ENCODE measurements at regions of chr9 and their contacts with region 1.

Region 1: DNA sequence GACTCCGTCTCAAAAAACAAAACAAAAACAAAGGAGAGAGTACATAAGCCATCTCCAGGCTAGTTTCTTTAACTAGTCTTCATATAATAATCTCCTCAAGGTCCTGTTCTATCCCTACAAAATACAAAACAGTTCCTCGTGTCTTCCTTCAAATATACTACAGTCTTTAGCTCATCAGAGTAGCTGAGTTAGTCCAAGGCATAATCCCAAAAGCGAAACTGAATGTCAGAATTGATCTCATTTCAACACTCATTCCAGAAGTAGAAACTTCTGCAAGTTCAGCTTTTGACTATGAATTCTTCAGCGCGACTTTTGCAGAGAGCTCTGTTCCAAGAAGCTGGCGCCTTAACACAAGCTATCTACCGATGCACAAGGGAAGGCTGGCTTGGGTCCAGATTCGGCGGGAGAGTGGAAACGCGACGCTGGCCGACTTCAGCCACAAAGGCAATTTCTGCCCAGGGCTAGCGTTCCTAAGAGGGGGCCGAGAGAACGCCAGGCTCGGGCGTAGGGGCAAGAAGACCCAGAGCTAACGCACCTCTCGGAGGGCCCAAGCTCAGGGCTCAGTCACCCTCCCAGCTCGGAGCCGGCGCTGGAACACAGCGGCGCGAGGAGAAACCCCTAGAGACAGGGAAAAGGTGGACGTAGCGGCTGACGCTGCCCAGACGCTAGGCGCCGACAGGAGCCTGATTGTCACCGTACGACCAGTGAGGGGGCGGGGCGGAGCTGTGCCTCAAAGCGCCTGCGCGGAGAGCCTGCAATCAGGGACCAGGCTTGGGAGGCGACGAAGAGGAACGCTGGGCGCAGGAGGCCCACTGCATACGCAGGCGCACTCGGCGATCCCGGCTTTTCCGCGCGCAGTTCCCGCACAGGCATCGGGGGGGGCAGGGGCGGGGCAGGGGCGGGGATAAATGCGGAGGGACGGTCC is 469 bp upstream of the HSDL2 start:
- DNase-seq: peak; percentile 96
- ATAC-seq: peak; percentile 91
- H3K4me3 ChIP-seq: peak overlapping the region; percentile 99
- H3K27ac ChIP-seq: peak overlapping the region; percentile 75
- H3K4me1 ChIP-seq: peaks cover 21% of the 10 kb centered on the region
- H3K27me3 ChIP-seq: no peaks in the 10 kb centered on the region
- CTCF ChIP-seq: no peak

Region 2: GRCh38 chr9:112288029-112288428 is 91.4 kb before region 1 on chr9:
- CTCF ChIA-PET with region 1: no interaction called
- POLR2A ChIA-PET with region 1: no interaction called
- intact Hi-C with region 1: no loop called
- DNase-seq: no peak
- ATAC-seq: no peak
- H3K4me3 ChIP-seq: no peak overlapping the region
- H3K27ac ChIP-seq: no peak overlapping the region
- H3K4me1 ChIP-seq: no peaks in the 10 kb centered on the region
- H3K27me3 ChIP-seq: no peaks in the 10 kb centered on the region
- CTCF ChIP-seq: no peak

Region 3: DNA sequence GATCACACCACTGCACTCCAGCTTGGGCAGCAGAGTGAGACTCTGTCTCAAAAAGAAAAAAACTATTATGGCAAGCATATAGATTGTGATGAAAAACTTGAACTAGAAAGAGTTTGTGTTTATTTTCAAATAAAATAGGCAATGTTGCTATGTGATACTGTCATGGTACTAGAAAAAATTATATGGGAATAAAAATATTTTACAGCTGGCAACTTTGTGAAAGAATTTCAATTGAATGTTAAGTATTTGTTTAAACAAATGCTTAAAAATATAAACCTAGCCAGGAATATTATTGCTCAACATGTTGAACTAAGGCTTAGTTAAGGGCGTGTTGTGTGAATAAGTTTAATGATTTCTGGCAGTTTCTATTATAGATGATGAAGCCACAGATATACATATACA is 32.2 kb after region 1 on chr9:
- CTCF ChIA-PET with region 1: no interaction called
- POLR2A ChIA-PET with region 1: no interaction called
- intact Hi-C with region 1: loop called (anchors 2 kb)
- DNase-seq: no peak
- ATAC-seq: peak; percentile 69
- H3K4me3 ChIP-seq: no peak overlapping the region
- H3K27ac ChIP-seq: no peak overlapping the region
- H3K4me1 ChIP-seq: no peaks in the 10 kb centered on the region
- H3K27me3 ChIP-seq: no peaks in the 10 kb centered on the region
- CTCF ChIP-seq: no peak

Region 4: GRCh38 chr9:112486221-112487007 is 107.0 kb after region 1 on chr9 and contains the start of gene KIAA1958:
- CTCF ChIA-PET with region 1: no interaction called
- POLR2A ChIA-PET with region 1: no interaction called
- intact Hi-C with region 1: loop called (anchors 10 kb)
- DNase-seq: peak; percentile 74
- ATAC-seq: peak; percentile 88
- H3K4me3 ChIP-seq: peak within 1 kb of the TSS; percentile 96
- H3K27ac ChIP-seq: no peak within 1 kb of the TSS; the same call in 1 of the 2 replicates
- H3K4me1 ChIP-seq: peaks cover 14% of the 10 kb centered on the region
- H3K27me3 ChIP-seq: no peaks in the 10 kb centered on the region
- CTCF ChIP-seq: no peak
- total RNA-seq, gene KIAA1958: 3.7 and 4.2 TPM in 2 replicates

Region 5: GRCh38 chr9:112495614-112496013 is 116.2 kb after region 1 on chr9:
- CTCF ChIA-PET with region 1: interaction called, 4 read pairs
- POLR2A ChIA-PET with region 1: interaction called, 18 read pairs
- intact Hi-C with region 1: no loop called
- DNase-seq: no peak
- ATAC-seq: no peak
- H3K4me3 ChIP-seq: no peak overlapping the region
- H3K27ac ChIP-seq: no peak overlapping the region
- H3K4me1 ChIP-seq: peaks cover 7% of the 10 kb centered on the region; the same call in 1 of the 2 replicates
- H3K27me3 ChIP-seq: no peaks in the 10 kb centered on the region
- CTCF ChIP-seq: no peak

Region 6: GRCh38 chr9:112665347-112665746 is 285.9 kb after region 1 on chr9:
- CTCF ChIA-PET with region 1: no interaction called
- POLR2A ChIA-PET with region 1: no interaction called
- intact Hi-C with region 1: loop called (anchors 10 kb)
- DNase-seq: peak; percentile 40
- ATAC-seq: peak; percentile 48
- H3K4me3 ChIP-seq: no peak overlapping the region
- H3K27ac ChIP-seq: no peak overlapping the region
- H3K4me1 ChIP-seq: peaks cover 4% of the 10 kb centered on the region; the same call in 1 of the 2 replicates
- H3K27me3 ChIP-seq: no peaks in the 10 kb centered on the region
- CTCF ChIP-seq: peak; percentile 52

Region 7: GRCh38 chr9:112831281-112831851 is 451.9 kb after region 1 on chr9:
- CTCF ChIA-PET with region 1: no interaction called
- POLR2A ChIA-PET with region 1: no interaction called
- intact Hi-C with region 1: no loop called
- DNase-seq: peak; percentile 52
- ATAC-seq: peak; percentile 88
- H3K4me3 ChIP-seq: no peak overlapping the region
- H3K27ac ChIP-seq: no peak overlapping the region
- H3K4me1 ChIP-seq: peaks cover 13% of the 10 kb centered on the region
- H3K27me3 ChIP-seq: no peaks in the 10 kb centered on the region
- CTCF ChIP-seq: no peak

Region 8: DNA sequence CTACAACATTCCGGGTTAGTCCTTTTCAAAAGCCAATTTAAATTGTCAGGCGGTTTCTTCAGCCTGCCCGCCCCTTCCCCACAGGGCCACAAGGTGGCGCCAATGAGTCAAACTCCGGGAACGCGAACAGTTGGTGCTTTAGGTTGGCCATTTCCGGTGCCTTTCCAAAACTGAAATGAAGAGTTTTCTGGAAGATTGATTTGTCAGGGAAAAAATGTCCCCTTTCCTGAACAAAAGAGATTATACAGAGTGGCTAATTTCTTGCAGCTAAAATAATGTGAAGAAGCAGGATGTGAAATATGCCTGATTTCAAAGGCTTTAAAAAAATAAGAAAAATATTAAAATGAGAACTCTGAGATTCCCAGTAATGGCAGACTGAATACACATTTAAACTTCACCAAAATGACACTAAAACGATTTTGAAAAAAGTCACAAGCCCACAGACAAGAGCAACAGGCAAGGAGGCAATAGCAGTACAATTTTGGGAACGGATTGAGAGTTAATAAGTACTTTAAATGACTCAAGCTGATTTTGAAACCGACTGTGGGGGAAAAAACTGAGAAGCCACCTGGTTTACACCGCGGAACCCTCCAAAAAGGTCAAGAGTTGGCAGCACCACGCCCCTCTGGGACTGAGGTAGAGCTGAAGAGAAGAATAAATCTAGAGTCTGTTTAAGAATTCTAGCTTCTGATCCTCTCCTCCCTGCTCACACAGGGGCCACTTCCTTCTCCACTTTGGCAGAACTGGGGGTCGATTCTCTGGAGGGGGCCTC is 465.5 kb after region 1 on chr9:
- CTCF ChIA-PET with region 1: no interaction called
- POLR2A ChIA-PET with region 1: no interaction called
- intact Hi-C with region 1: no loop called
- DNase-seq: peak; percentile 82
- ATAC-seq: peak; percentile 60
- H3K4me3 ChIP-seq: no peak overlapping the region
- H3K27ac ChIP-seq: no peak overlapping the region
- H3K4me1 ChIP-seq: peaks cover 5% of the 10 kb centered on the region; the same call in 1 of the 2 replicates
- H3K27me3 ChIP-seq: no peaks in the 10 kb centered on the region
- CTCF ChIP-seq: peak; percentile 91

Measured in PC-3 (cell line).